ENCODE measurements at regions of chr10 and their contacts with region 1.

Region 1: GRCh38 chr10:29304264-29305030 is 15.6 kb downstream of the LYZL1 start:
- DNase-seq: peak in 3 of 5 donors; percentile 40 to 49 (median 42)
- ATAC-seq: peak; percentile 73 to 88 (median 80)
- H3K4me3 ChIP-seq: peak overlapping the region in 3 of 12 donors; percentile 3 to 11 (median 7)
- H3K27ac ChIP-seq: peak overlapping the region in 5 of 12 donors; percentile 16 to 49 (median 36)
- H3K4me1 ChIP-seq: peaks cover 0 to 10% (median 5%) of the 10 kb centered on the region in 12 donors
- H3K27me3 ChIP-seq: peaks cover 0 to 6% (median 0%) of the 10 kb centered on the region in 9 donors
- CTCF ChIP-seq: peak; percentile 62 to 90 (median 78)
- POLR2A ChIP-seq: no peak

Region 2: GRCh38 chr10:28663576-28664313 is 640.7 kb before region 1 on chr10:
- intact Hi-C with region 1: loop called (anchors 1 to 5 kb)
- DNase-seq: peak; percentile 70 to 81 (median 74)
- ATAC-seq: peak; percentile 66 to 93 (median 88)
- H3K4me3 ChIP-seq: no peak overlapping the region
- H3K27ac ChIP-seq: no peak overlapping the region
- H3K4me1 ChIP-seq: peaks cover 0 to 16% (median 3%) of the 10 kb centered on the region in 12 donors
- H3K27me3 ChIP-seq: peaks cover 0 to 20% (median 0%) of the 10 kb centered on the region in 9 donors
- CTCF ChIP-seq: peak; percentile 86 to 98 (median 96)
- POLR2A ChIP-seq: no peak

Region 3: DNA sequence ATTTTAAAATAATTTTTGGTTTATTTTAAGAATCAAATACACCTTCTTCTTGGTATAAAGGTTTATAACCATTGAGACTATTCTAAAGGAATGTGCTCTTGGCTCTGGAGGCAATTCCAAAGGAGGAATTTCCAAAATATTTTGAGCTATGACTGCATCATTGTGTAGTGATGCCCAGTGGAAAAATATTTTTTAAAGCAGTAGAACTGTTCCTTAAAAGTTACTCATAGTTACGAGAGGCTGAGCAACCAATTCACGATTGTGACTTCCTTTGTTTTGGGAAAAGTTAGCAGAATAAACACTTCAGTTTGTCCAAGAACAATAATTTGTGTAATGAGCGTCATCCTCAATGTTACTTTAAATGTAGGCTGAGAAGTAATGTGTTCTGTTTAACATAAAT is 393.5 kb before region 1 on chr10:
- intact Hi-C with region 1: no loop called
- DNase-seq: no peak
- ATAC-seq: peak in 3 of 4 donors; percentile 34 to 64 (median 36)
- H3K4me3 ChIP-seq: no peak overlapping the region
- H3K27ac ChIP-seq: peak overlapping the region in 2 of 12 donors; percentile 6 to 13
- H3K4me1 ChIP-seq: peaks cover 0 to 7% (median 0%) of the 10 kb centered on the region in 12 donors
- H3K27me3 ChIP-seq: no peaks in the 10 kb centered on the region
- CTCF ChIP-seq: no peak
- POLR2A ChIP-seq: no peak

Region 4: DNA sequence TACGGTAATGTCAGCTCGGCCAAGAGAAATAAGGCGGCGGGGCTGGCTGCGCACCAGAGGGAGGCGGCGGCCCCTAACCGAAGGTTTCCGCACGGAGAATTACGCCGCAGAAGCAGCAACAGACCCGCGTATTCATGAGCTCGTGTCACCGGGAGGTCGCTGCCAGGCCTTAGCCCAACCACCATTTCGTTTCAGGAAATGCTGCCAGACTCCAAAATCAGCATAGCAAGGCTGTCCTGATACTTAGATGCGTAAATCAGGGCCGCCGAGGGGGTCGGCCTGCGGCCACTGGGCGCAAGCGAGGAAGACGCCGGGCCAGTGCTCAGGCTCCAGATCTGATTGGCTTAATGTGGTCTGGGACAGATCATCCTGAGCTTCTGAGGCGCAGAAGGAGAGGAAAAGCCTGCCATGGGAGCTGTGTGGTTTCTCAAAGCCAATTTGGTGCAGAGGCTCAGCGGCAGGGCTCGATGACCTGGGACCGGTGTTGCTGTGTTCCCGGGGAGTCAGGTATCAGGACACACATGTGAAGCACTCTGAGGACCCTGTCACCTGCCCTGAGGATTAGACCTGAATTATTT is 379.2 kb before region 1 on chr10:
- intact Hi-C with region 1: no loop called
- DNase-seq: peak in 1 of 5 donors; percentile 31
- ATAC-seq: peak in 3 of 4 donors; percentile 39 to 69 (median 51)
- H3K4me3 ChIP-seq: peak overlapping the region in 8 of 12 donors; percentile 4 to 33 (median 15)
- H3K27ac ChIP-seq: no peak overlapping the region
- H3K4me1 ChIP-seq: peaks cover 0 to under 1% (median 0%) of the 10 kb centered on the region in 12 donors
- H3K27me3 ChIP-seq: no peaks in the 10 kb centered on the region
- CTCF ChIP-seq: no peak
- POLR2A ChIP-seq: no peak

Region 5: DNA sequence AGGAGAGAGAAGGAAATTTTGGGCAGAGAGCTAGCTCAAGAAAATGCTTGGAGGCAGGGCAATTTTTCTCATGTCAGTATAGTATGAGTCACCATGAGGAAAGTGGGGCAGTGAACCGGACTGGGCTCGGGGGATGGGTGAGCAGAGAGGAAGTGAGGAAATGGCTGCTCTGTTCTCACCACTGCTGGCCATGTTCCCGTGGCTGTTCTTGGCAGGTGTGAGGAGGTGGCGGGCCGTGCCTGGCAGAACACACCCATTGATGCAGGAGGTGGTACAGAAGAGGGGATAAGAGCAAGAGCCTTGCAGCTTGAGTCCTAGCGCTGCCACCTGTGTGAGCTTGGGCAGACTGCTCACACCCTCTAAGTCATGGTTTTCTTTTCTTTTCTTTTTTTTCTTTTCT is 320.0 kb before region 1 on chr10:
- intact Hi-C with region 1: loop called in 1 of 10 experiments (anchors 5 kb)
- DNase-seq: peak; percentile 75 to 94 (median 90)
- ATAC-seq: peak; percentile 95 to 98 (median 98)
- H3K4me3 ChIP-seq: no peak overlapping the region
- H3K27ac ChIP-seq: peak overlapping the region in 3 of 12 donors; percentile 32 to 56 (median 36)
- H3K4me1 ChIP-seq: peaks cover 0 to 21% (median 14%) of the 10 kb centered on the region in 12 donors
- H3K27me3 ChIP-seq: no peaks in the 10 kb centered on the region
- CTCF ChIP-seq: no peak
- POLR2A ChIP-seq: no peak

Region 6: GRCh38 chr10:29096303-29096824 is 208.1 kb before region 1 on chr10:
- intact Hi-C with region 1: no loop called
- DNase-seq: no peak
- ATAC-seq: no peak
- H3K4me3 ChIP-seq: no peak overlapping the region
- H3K27ac ChIP-seq: no peak overlapping the region
- H3K4me1 ChIP-seq: no peaks in the 10 kb centered on the region
- H3K27me3 ChIP-seq: no peaks in the 10 kb centered on the region
- CTCF ChIP-seq: no peak
- POLR2A ChIP-seq: no peak

Region 7: DNA sequence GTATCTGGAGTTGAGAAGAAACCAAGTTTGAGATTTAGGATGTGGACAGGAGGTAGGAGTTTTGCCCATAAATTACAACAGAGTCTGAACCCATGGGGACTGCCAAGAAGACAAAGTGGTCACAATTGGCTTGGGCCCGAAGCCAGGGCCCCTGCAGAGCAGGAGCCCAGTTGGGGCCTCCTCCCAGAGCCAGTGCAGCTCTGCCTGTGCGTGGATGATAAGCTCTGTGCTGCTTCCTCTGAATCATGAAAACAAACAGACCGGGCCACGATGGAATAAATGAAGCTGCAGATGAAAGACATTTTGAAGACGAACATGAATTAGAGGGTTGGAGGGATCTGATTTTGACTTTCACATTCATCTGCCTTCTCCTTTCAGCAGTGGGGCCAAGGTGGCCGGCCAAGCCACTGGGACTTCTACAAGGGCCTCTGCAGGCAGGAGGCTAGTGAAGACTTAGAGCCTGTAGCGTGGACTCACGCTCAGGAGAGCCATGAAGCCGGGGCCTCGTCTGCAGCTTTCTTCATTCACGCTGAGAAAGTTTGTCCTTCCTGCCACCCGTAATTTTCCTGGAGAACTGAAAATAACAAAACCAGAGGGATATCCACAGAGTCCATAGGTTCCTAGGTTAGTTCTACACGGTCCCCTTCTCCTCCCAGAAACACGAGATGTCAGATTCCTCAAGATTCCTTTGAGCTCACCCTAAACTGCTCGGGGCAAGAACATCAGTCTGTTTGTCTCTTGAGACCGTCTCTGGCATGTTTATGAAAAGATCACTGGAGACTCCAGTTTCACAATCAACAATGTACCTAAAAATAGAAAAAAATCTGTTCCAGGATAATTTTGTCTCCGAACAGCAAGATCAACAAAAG is 172.3 kb before region 1 on chr10:
- intact Hi-C with region 1: loop called in 3 of 10 experiments (anchors 10 kb)
- DNase-seq: peak in 4 of 5 donors; percentile 16 to 64 (median 38)
- ATAC-seq: peak; percentile 23 to 86 (median 74)
- H3K4me3 ChIP-seq: no peak overlapping the region
- H3K27ac ChIP-seq: peak overlapping the region in 6 of 12 donors; percentile 8 to 31 (median 18)
- H3K4me1 ChIP-seq: peaks cover 0 to 17% (median 4%) of the 10 kb centered on the region in 12 donors
- H3K27me3 ChIP-seq: peaks cover 0 to under 1% (median 0%) of the 10 kb centered on the region in 9 donors
- CTCF ChIP-seq: no peak
- POLR2A ChIP-seq: no peak

Region 8: GRCh38 chr10:29239569-29240472 is 64.6 kb before region 1 on chr10:
- intact Hi-C with region 1: loop called in 3 of 10 experiments (anchors 2 to 10 kb)
- DNase-seq: peak in 1 of 5 donors; percentile 31
- ATAC-seq: peak in 2 of 4 donors; percentile 42 to 60
- H3K4me3 ChIP-seq: no peak overlapping the region
- H3K27ac ChIP-seq: no peak overlapping the region
- H3K4me1 ChIP-seq: no peaks in the 10 kb centered on the region
- H3K27me3 ChIP-seq: no peaks in the 10 kb centered on the region
- CTCF ChIP-seq: peak; percentile 18 to 52 (median 34)
- POLR2A ChIP-seq: no peak

Region 9: DNA sequence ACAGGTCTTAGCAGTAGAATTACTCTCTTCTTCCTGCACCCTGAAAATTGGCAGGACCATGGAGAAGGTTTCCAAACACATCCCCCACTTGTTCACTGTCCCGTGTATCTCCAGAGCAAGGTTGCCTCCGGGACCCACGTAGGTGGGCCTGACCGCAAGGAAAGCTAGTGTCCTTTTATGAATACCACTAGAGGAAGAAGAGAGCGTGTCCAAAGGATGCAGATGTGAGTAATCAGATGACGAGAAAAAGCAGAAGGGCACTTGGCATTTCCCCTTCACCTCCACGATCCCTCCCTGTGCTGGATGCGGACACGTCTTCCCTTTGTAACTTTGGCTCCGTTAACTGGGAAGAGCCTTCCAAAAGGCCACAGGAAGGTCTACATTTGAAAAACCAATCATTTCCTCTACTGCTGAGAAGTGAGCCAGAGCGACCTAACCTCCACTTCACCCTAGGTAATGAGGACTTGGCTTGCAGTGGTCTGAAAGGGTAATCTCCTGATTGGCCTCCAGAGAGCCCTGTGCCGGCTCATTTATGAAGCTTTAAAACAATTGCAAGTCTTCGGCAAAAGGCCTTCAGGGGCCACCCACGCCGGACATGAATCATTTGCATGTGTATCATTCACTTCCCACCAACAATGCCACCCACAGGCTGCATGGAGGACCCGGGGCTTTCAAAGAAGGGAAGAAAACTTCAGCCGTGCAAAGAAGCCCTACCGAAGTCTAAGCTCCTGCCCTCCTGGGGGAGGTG is 39.8 kb after region 1 on chr10:
- intact Hi-C with region 1: no loop called
- DNase-seq: peak in 3 of 5 donors; percentile 22 to 46 (median 33)
- ATAC-seq: peak in 3 of 4 donors; percentile 55 to 83 (median 61)
- H3K4me3 ChIP-seq: no peak overlapping the region
- H3K27ac ChIP-seq: peak overlapping the region in 2 of 12 donors; percentile 1 to 13
- H3K4me1 ChIP-seq: peaks cover 0 to 17% (median 2%) of the 10 kb centered on the region in 12 donors
- H3K27me3 ChIP-seq: no peaks in the 10 kb centered on the region
- CTCF ChIP-seq: no peak
- POLR2A ChIP-seq: no peak